ENCODE measurements at regions of chr16 and their contacts with region 1.

Region 1: GRCh38 chr16:2429034-2429770 is at the start of gene CCNF:
- DNase-seq: peak; percentile 99
- ATAC-seq: peak; percentile 97
- H3K4me3 Mint-ChIP-seq: peak within 1 kb of the TSS; percentile 97
- H3K27ac Mint-ChIP-seq: peak within 1 kb of the TSS; percentile 76
- H3K4me1 Mint-ChIP-seq: peaks cover 16% of the 10 kb centered on the region
- H3K27me3 Mint-ChIP-seq: no peaks in the 10 kb centered on the region
- total RNA-seq, gene CCNF: 52.2 to 53.4 TPM

Region 2: GRCh38 chr16:1942810-1943726 is 486.1 kb before region 1 on chr16 and contains the start of gene MSRB1:
- CTCF ChIA-PET with region 1: no interaction called
- POLR2A ChIA-PET with region 1: no interaction called
- intact Hi-C with region 1: loop called in 1 of 2 experiments (anchors 1 kb)
- DNase-seq: peak; percentile 100
- ATAC-seq: peak; percentile 97
- H3K4me3 Mint-ChIP-seq: peak within 1 kb of the TSS; percentile 80
- H3K27ac Mint-ChIP-seq: peak within 1 kb of the TSS; percentile 82
- H3K4me1 Mint-ChIP-seq: peaks cover 26% of the 10 kb centered on the region
- H3K27me3 Mint-ChIP-seq: no peaks in the 10 kb centered on the region
- total RNA-seq, gene MSRB1: 17.3 to 21.8 TPM

Region 3: GRCh38 chr16:2205104-2205966 is 223.9 kb before region 1 on chr16 and contains the start of gene MLST8:
- CTCF ChIA-PET with region 1: no interaction called
- POLR2A ChIA-PET with region 1: no interaction called
- intact Hi-C with region 1: loop called in 1 of 2 experiments (anchors 1 kb)
- DNase-seq: peak; percentile 92
- ATAC-seq: peak; percentile 84
- H3K4me3 Mint-ChIP-seq: peak within 1 kb of the TSS; percentile 83
- H3K27ac Mint-ChIP-seq: peak within 1 kb of the TSS; percentile 84
- H3K4me1 Mint-ChIP-seq: peaks cover 16% of the 10 kb centered on the region
- H3K27me3 Mint-ChIP-seq: no peaks in the 10 kb centered on the region
- total RNA-seq, gene MLST8: 61.3 to 76.1 TPM

Region 4: DNA sequence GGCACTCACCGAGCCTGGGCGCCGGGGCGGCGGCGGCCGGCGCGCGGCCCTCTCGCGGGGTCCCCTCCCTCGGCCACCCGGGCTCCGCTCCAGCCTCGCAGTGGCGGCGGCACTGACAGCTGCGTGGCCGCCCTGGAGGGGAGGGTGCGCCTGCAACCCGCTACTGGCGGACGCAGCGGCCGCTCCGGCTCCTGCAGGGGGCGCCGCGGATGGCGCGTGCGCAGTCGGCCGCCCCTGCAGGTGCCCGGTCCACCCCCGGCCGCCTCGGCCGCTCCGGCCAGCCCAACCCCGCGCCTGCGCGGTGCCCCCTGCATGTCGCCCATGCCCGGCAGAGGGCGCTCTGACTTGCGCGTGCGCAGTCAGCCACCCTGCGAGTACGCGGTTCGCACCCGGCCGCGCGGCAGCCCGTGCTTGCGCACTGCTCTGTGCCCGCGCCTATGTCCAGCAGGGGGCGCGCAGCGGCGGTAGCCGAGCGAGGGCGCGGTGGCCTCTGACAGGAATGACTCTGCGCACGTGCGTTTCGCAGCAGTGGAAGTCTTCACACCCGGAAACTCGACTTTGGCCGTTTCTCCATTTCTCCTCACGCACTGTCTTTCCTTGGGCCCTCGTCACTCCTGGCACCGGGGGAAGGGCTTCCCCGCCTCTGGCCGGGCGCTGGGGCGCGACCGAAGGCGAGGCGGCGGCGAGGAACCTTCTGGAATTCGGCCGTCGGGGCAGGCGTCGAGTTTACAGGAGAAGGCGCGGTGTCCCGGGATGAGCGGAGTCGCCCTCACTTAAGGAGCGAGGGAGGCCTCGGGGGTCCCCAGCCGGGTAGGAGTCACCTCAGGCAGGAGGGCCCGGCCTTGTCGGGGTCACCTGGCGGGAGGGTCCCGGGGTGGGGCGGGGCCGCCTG is 88.4 kb before region 1 on chr16 and contains the start of gene ABCA3:
- CTCF ChIA-PET with region 1: interaction called, 3 read pairs
- POLR2A ChIA-PET with region 1: no interaction called
- intact Hi-C with region 1: loop called (anchors 1 to 2 kb)
- DNase-seq: peak; percentile 97
- ATAC-seq: peak; percentile 92
- H3K4me3 Mint-ChIP-seq: peak within 1 kb of the TSS; percentile 82
- H3K27ac Mint-ChIP-seq: peak within 1 kb of the TSS; percentile 21
- H3K4me1 Mint-ChIP-seq: peaks cover 13% of the 10 kb centered on the region
- H3K27me3 Mint-ChIP-seq: peaks cover 7% of the 10 kb centered on the region
- total RNA-seq, gene ABCA3: 6.0 to 7.2 TPM

Region 5: GRCh38 chr16:2450535-2450934 is 21.3 kb after region 1 on chr16:
- CTCF ChIA-PET with region 1: no interaction called
- POLR2A ChIA-PET with region 1: no interaction called
- intact Hi-C with region 1: no loop called
- DNase-seq: no peak
- ATAC-seq: no peak
- H3K4me3 Mint-ChIP-seq: no peak overlapping the region
- H3K27ac Mint-ChIP-seq: no peak overlapping the region
- H3K4me1 Mint-ChIP-seq: no peaks in the 10 kb centered on the region
- H3K27me3 Mint-ChIP-seq: no peaks in the 10 kb centered on the region

Region 6: DNA sequence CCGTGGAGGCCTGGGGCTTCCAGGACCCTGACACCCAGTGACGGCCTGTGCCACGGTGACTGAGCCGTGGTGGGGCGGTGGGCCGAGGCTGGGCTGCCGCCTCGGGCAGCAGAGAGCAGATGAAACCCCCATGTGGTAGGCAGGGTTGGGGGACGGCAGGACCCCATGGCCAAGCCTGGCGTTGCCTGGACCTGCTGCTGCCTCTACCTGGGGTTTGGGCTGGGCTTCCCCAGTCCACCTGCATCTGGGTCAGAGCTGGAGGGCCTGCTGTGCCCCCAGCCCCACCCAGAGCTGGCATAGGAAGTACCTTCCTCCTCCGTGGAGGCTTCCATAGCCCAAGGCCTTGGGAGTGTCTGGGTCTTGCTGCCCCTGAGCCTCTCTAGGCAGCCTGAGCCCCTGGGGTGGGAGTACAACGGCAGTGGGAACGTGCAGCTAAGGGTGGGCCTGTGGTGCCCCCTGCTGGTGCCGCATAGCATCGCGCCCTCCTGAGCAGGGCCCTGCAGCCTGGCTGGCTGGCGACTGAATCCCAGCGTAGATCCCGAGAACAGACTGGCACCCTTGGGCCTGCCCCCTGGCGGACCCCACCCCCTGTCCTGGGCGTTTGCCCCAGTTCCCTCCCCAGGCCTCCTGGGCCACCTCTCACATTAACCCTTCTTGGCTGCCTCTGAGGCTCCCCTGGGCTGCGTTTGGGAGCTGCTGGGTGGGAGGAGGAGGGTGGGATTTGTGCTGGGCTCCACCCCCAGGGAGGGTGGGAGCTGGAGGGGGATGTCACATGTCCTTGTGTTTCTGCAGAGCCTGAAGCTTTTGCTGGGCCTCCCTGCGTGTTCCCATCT is 71.9 kb after region 1 on chr16:
- CTCF ChIA-PET with region 1: interaction called, 3 read pairs
- POLR2A ChIA-PET with region 1: no interaction called
- intact Hi-C with region 1: loop called (anchors 1 to 5 kb)
- DNase-seq: peak; percentile 89
- ATAC-seq: peak; percentile 98
- H3K4me3 Mint-ChIP-seq: no peak overlapping the region
- H3K27ac Mint-ChIP-seq: no peak overlapping the region
- H3K4me1 Mint-ChIP-seq: no peaks in the 10 kb centered on the region
- H3K27me3 Mint-ChIP-seq: no peaks in the 10 kb centered on the region

Region 7: DNA sequence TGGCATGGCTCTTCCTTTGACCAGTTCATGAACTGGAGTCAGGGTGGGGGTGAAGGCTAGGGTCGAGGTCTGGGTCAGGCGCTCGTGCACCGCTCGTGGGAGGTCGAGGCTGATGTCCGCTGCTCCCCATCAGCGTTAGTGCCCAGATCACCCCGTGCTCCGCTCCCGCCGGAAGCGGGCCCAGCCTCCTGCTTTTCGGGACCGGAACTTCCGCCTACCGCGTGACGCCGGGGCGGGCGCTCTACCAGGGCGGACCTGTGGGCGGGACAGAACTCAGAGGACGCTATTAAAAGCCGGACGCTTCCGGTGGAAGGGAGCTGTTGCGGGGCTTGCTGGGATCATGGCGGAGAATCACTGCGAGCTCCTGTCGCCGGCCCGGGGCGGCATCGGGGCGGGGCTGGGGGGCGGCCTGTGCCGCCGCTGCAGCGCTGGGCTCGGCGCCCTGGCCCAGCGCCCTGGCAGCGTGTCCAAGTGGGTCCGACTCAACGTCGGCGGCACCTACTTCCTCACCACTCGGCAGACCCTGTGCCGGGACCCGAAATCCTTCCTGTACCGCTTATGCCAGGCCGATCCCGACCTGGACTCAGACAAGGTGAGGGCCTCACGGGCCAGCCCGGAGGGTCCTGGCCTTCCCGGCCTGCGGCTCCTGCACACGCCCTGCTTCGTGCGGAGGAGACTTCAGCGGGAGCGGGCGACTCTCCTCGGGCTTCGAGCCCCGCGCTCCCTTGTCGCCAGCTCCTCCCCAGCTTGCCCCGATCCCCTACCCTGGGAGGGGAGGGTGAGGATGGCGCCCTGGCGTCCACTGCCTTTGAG is 253.2 kb after region 1 on chr16 and contains the start of gene KCTD5:
- CTCF ChIA-PET with region 1: no interaction called
- POLR2A ChIA-PET with region 1: no interaction called
- intact Hi-C with region 1: loop called in 1 of 2 experiments (anchors 2 kb)
- DNase-seq: peak; percentile 98
- ATAC-seq: peak; percentile 92
- H3K4me3 Mint-ChIP-seq: peak within 1 kb of the TSS; percentile 100
- H3K27ac Mint-ChIP-seq: peak within 1 kb of the TSS; percentile 98
- H3K4me1 Mint-ChIP-seq: peaks cover 28% of the 10 kb centered on the region
- H3K27me3 Mint-ChIP-seq: no peaks in the 10 kb centered on the region
- total RNA-seq, gene KCTD5: 24.0 to 26.2 TPM

Region 8: DNA sequence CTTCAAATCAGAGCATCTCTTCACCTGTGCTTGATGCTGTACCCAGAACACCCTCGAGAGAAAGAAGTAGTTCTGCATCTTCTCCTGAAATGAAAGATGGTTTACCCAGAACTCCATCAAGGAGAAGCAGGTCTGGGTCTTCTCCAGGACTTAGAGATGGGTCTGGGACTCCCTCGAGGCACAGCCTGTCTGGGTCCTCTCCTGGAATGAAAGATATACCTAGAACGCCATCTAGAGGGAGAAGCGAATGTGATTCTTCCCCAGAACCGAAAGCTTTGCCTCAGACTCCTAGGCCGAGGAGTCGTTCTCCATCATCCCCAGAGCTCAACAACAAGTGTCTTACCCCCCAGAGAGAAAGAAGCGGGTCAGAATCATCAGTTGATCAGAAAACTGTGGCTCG is 335.5 kb after region 1 on chr16:
- CTCF ChIA-PET with region 1: no interaction called
- POLR2A ChIA-PET with region 1: no interaction called
- intact Hi-C with region 1: no loop called
- DNase-seq: no peak
- ATAC-seq: no peak
- H3K4me3 Mint-ChIP-seq: no peak overlapping the region
- H3K27ac Mint-ChIP-seq: no peak overlapping the region
- H3K4me1 Mint-ChIP-seq: peaks cover 5% of the 10 kb centered on the region
- H3K27me3 Mint-ChIP-seq: no peaks in the 10 kb centered on the region

Measured in activated CD4-positive, alpha-beta T cell treated with anti-CD3 and anti-CD28 coated beads for 36 hours (primary cell).